ENCODE measurements at regions of chr9 and their contacts with region 1.

Region 1: DNA sequence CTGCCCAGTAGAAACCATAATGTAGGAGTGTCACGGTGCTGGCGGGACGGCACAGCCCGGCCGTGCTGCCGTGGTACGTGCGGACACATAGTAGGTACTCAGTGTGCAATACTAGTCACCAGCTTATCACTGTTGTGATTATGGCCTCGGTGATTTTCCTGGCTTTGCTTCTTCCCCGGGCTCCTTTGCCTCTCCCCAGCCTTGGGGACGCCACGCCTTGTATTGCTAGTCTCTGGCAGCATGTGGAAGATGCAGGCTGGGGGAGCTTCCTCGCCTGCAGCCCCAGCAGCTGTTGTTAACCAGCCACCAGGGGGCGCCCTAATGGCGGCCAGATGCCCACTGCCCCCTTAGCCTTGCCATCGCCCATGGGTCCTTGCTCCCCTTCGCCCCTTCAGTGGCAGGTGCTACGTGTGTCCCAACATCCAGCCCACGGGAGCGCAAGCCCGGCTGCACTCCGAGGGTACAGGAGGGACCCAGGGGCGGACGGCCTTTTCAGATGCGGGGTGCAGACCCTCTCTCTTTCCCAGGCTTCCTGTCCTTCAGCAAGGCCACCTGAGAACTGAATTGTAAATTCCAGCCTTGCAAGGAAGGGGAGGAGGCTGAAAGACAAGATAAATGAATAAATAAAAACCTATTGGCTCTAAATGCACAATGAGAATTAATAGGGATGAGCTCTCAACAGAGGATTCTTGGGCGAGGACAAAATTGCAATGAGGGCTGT is 8.0 kb downstream of the NTNG2 start:
- DNase-seq: peak; percentile 31
- H3K4me3 ChIP-seq: no peak overlapping the region
- H3K27ac ChIP-seq: no peak overlapping the region
- H3K4me1 ChIP-seq: no peaks in the 10 kb centered on the region
- H3K27me3 ChIP-seq: peaks cover 4% of the 10 kb centered on the region
- CTCF ChIP-seq: peak; percentile 74 to 90

Region 2: DNA sequence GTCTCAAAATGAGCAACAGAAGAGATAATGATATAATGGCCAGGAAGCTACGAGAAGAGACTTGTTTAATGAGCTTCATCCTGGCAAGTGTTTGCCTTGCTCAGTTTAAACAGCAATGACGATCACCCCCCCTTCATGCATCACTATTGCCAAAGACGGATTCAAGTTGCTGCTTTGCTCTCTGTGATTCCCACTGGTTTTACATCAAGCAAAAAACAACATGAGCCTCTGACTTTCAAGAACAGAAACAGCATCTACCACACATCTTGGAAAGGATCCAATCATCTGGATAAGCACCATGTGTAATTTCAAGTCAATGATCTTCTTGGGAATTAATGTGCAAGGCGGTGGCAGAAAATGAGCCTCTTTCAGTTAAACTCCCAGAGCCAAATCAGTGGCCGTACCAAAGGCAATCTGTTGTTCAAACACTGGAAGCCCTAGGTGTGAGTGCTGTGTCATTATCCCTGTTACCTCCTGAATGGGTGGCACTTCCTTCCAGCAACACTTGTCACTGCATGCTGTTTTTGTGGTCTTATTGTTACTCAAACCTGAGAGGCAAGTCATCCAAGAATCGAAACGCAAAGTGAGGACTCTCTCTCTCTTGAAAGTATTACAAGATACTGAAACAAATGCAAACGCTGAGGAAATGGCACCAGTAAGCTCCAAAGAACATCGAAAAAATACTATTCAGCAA is 163.0 kb before region 1 on chr9:
- CTCF ChIA-PET with region 1: no interaction called
- dilution Hi-C with region 1: no loop called
- in situ Hi-C with region 1: no loop called
- intact Hi-C with region 1: loop called (anchors 10 kb)
- DNase-seq: peak; percentile 80
- H3K4me3 ChIP-seq: no peak overlapping the region
- H3K27ac ChIP-seq: peak overlapping the region; percentile 81
- H3K4me1 ChIP-seq: peaks cover 51% of the 10 kb centered on the region
- H3K27me3 ChIP-seq: no peaks in the 10 kb centered on the region
- CTCF ChIP-seq: no peak

Region 3: DNA sequence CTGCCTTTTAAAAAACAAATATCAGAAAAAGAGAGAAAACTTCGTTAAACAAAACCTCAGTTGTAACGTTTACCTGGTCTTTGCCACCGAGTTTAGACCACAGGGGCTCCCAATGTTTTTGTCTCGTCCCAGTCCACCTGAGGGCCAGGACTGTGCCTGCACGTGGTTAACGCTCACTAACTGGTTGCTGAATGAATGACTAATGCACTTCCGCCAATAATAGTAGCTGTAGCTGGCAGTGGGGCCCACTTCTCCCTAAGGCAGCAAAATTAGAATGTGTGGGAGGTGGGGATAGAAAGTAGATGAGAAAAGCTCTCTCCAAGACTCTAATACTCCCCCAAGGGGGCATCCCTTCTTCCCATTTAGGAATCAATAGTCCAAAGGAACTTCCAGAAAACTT is 61.1 kb before region 1 on chr9:
- CTCF ChIA-PET with region 1: no interaction called
- dilution Hi-C with region 1: no loop called
- in situ Hi-C with region 1: no loop called
- intact Hi-C with region 1: no loop called
- DNase-seq: no peak
- H3K4me3 ChIP-seq: no peak overlapping the region
- H3K27ac ChIP-seq: no peak overlapping the region
- H3K4me1 ChIP-seq: no peaks in the 10 kb centered on the region
- H3K27me3 ChIP-seq: no peaks in the 10 kb centered on the region
- CTCF ChIP-seq: no peak

Region 4: GRCh38 chr9:132185073-132186012 is 15.5 kb after region 1 on chr9:
- CTCF ChIA-PET with region 1: interaction called, 29 read pairs
- dilution Hi-C with region 1: no loop called
- in situ Hi-C with region 1: no loop called
- intact Hi-C with region 1: no loop called
- DNase-seq: no peak
- H3K4me3 ChIP-seq: no peak overlapping the region
- H3K27ac ChIP-seq: no peak overlapping the region
- H3K4me1 ChIP-seq: no peaks in the 10 kb centered on the region
- H3K27me3 ChIP-seq: peaks cover 14% of the 10 kb centered on the region
- CTCF ChIP-seq: no peak

Region 5: DNA sequence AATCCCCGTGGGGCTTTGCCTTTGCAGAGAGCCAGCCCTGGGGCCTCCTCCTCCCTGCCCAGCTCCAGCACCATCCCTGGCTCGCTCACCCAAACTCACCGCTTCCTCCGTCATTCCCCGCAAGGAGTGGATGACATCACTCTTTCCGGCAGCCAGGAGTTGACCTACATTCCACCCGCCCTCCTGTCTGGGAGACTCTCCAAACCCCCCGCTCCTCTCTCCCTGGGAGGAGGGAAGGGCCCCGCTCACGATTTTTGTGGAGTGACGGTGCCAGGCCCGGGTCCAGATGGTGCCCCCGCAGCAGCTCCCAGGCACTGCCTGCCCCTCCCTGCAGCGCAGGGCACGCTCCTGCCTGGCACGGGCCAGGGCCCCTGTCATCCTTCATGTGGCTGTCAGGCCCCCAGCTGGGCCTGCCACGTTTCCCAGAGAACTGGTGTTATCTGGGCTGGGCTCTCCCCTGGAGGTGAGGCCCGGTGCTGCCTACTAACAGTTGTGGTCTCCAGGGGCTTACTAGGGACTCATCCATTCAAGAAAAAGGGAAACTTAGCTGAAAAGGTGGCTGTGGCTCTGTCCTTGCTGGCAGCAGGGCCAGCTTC is 44.3 kb after region 1 on chr9:
- CTCF ChIA-PET with region 1: no interaction called
- dilution Hi-C with region 1: no loop called
- in situ Hi-C with region 1: no loop called
- intact Hi-C with region 1: no loop called
- DNase-seq: peak; percentile 79
- H3K4me3 ChIP-seq: no peak overlapping the region
- H3K27ac ChIP-seq: no peak overlapping the region
- H3K4me1 ChIP-seq: peaks cover 13% of the 10 kb centered on the region
- H3K27me3 ChIP-seq: no peaks in the 10 kb centered on the region
- CTCF ChIP-seq: no peak

Region 6: GRCh38 chr9:132268725-132269352 is 99.0 kb after region 1 on chr9:
- CTCF ChIA-PET with region 1: no interaction called
- dilution Hi-C with region 1: no loop called
- in situ Hi-C with region 1: no loop called
- intact Hi-C with region 1: no loop called
- DNase-seq: no peak
- H3K4me3 ChIP-seq: no peak overlapping the region
- H3K27ac ChIP-seq: no peak overlapping the region
- H3K4me1 ChIP-seq: no peaks in the 10 kb centered on the region
- H3K27me3 ChIP-seq: no peaks in the 10 kb centered on the region
- CTCF ChIP-seq: peak; percentile 51 to 59